ENCODE measurements at regions of chr9 and their contacts with region 1.

Region 1: GRCh38 chr9:87324613-87325194 is 173.0 kb upstream of the DAPK1 start:
- DNase-seq: no peak
- H3K4me3 Mint-ChIP-seq: no peak overlapping the region
- H3K27ac Mint-ChIP-seq: no peak overlapping the region
- H3K4me1 Mint-ChIP-seq: no peaks in the 10 kb centered on the region
- H3K27me3 Mint-ChIP-seq: peaks cover 8% of the 10 kb centered on the region

Region 2: DNA sequence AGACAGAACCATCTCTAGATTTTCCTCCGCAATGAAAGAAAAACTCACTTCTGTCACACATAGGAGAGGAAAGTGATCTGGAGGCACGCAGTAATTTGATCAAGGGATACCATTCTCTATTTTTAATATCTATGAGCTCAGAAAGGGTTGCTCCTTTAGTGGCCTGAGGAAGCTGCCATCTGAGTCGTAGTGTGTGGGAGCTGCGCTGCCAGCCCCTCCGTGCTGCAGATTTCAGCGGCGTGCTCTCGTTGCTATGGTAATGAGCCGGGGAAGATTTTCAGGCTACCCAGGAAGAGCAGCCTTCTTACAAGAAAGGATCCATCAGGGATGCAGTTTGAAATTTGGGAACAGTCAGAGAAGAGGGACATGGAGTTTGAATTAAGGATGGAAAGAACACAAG is 1208.3 kb before region 1 on chr9:
- CTCF ChIA-PET with region 1: no interaction called
- POLR2A ChIA-PET with region 1: no interaction called
- intact Hi-C with region 1: no loop called
- DNase-seq: no peak
- H3K4me3 Mint-ChIP-seq: no peak overlapping the region
- H3K27ac Mint-ChIP-seq: no peak overlapping the region
- H3K4me1 Mint-ChIP-seq: no peaks in the 10 kb centered on the region
- H3K27me3 Mint-ChIP-seq: peaks cover 4% of the 10 kb centered on the region

Region 3: DNA sequence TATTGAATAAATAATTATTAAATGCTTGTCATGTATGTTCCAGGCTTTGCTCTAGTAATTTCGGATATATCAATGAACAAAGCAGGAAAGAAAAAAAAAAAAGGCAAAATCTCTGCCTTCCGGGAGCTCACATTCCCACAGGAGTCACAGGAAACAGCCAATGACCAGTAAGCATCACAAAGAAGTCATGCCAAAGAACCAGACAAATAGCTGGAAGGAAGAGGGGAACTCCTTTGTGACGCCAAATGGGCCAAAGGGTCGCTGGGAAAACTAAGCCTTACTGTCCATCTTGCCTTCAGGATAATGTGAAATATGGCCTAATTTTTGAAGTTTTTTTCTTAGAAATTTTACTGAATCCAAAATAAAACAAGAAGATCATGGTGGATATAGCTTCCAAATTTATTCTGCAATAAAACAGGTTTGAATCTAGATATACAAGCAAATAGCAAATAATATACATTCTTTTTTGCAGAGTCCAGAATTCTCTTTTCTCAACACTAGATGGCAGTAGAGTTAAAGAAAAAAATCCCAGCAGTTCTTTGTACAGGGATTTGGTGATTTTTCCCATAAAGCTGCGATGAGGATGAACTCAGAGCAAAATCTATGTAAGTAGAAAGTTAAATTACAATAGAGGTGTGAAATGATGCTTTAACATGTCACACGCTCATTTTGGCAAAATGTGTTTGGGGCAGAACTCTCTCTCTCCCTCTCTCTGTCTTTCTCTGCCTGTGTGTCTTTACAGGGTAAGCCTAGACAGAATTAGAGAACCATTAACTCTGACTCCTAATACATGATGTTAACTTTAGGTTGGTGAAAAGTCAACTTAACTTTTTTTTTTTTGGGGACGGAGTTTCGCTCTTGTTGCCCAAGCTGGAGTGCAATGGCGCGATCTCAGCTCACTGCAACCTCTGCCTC is 910.5 kb before region 1 on chr9:
- CTCF ChIA-PET with region 1: interaction called, 12 read pairs
- POLR2A ChIA-PET with region 1: no interaction called
- intact Hi-C with region 1: loop called (anchors 1 kb)
- DNase-seq: no peak
- H3K4me3 Mint-ChIP-seq: no peak overlapping the region
- H3K27ac Mint-ChIP-seq: no peak overlapping the region
- H3K4me1 Mint-ChIP-seq: no peaks in the 10 kb centered on the region
- H3K27me3 Mint-ChIP-seq: peaks cover 4% of the 10 kb centered on the region

Region 4: GRCh38 chr9:86434039-86434726 is 890.5 kb before region 1 on chr9:
- CTCF ChIA-PET with region 1: interaction called, 33 read pairs
- POLR2A ChIA-PET with region 1: no interaction called
- intact Hi-C with region 1: loop called (anchors 1 kb)
- DNase-seq: no peak
- H3K4me3 Mint-ChIP-seq: no peak overlapping the region
- H3K27ac Mint-ChIP-seq: no peak overlapping the region
- H3K4me1 Mint-ChIP-seq: no peaks in the 10 kb centered on the region
- H3K27me3 Mint-ChIP-seq: peaks cover 8% of the 10 kb centered on the region

Region 5: GRCh38 chr9:86486891-86487837 is 837.5 kb before region 1 on chr9:
- CTCF ChIA-PET with region 1: interaction called, 13 read pairs
- POLR2A ChIA-PET with region 1: no interaction called
- intact Hi-C with region 1: loop called (anchors 2 kb)
- DNase-seq: no peak
- H3K4me3 Mint-ChIP-seq: no peak overlapping the region
- H3K27ac Mint-ChIP-seq: no peak overlapping the region
- H3K4me1 Mint-ChIP-seq: peaks cover 7% of the 10 kb centered on the region
- H3K27me3 Mint-ChIP-seq: no peaks in the 10 kb centered on the region

Region 6: DNA sequence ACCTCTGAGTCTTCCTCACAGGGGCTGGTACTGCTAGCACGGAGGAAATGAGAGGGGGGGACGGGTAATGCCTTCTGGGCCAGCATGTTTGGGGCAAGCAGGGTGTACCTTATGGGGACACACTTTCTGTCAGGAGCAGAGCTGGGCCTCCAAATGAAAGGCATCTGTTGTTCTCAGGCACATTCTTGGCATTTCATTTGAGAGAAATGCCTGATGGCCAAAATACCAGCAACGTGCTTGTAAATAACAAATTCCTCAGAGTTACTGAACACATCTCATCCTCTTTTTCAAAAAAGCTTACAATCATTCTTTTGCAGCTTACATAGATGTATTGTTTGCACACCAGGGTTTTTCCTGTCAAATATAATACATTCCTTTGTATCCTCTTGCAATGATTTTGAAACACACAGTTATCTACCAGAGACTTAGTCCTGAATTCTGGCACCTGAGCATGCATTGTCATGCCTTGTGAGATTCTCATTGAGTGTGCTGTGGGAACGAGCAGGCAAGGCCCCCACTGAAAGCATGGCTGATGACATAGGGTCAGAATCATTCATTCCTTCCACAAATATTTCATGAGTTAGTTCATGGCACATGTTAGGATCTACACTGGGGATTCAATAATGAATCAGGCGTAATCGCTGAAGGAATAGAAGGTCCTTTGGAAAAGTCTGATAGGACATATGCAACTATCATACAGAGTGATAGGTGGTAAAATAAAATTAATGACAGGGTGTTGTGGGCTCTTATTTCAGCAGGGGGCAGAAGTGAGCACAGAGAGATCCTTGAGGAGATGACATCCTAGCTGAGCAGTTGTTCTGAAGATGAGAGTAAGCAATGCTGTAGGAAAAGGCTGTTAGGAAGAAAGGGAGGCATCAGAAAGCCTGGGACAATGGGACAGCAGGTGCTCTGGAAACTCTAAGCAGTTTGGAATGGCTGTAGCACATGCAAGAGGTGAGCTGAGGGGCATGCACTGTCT is 709.5 kb before region 1 on chr9:
- CTCF ChIA-PET with region 1: interaction called, 21 read pairs
- POLR2A ChIA-PET with region 1: no interaction called
- intact Hi-C with region 1: loop called (anchors 10 kb)
- DNase-seq: peak; percentile 11
- H3K4me3 Mint-ChIP-seq: no peak overlapping the region
- H3K27ac Mint-ChIP-seq: no peak overlapping the region
- H3K4me1 Mint-ChIP-seq: no peaks in the 10 kb centered on the region
- H3K27me3 Mint-ChIP-seq: peaks cover 1% of the 10 kb centered on the region

Region 7: GRCh38 chr9:87238545-87238944 is 86.2 kb before region 1 on chr9:
- CTCF ChIA-PET with region 1: no interaction called
- POLR2A ChIA-PET with region 1: no interaction called
- intact Hi-C with region 1: no loop called
- DNase-seq: no peak
- H3K4me3 Mint-ChIP-seq: no peak overlapping the region
- H3K27ac Mint-ChIP-seq: no peak overlapping the region
- H3K4me1 Mint-ChIP-seq: peaks cover 2% of the 10 kb centered on the region
- H3K27me3 Mint-ChIP-seq: peaks cover 8% of the 10 kb centered on the region